ENCODE measurements at regions of chr11 and their contacts with region 1.

Region 1: GRCh38 chr11:35288817-35289541 is 130.4 kb downstream of the SLC1A2 start:
- DNase-seq: no peak
- H3K4me3 Mint-ChIP-seq: no peak overlapping the region
- H3K27ac Mint-ChIP-seq: peak overlapping the region; percentile 44
- H3K4me1 Mint-ChIP-seq: peaks cover 45% of the 10 kb centered on the region
- H3K27me3 Mint-ChIP-seq: no peaks in the 10 kb centered on the region

Region 2: GRCh38 chr11:35106595-35106994 is 182.4 kb before region 1 on chr11:
- intact Hi-C with region 1: no loop called
- DNase-seq: no peak
- H3K4me3 Mint-ChIP-seq: no peak overlapping the region
- H3K27ac Mint-ChIP-seq: no peak overlapping the region
- H3K4me1 Mint-ChIP-seq: peaks cover 28% of the 10 kb centered on the region
- H3K27me3 Mint-ChIP-seq: peaks cover 28% of the 10 kb centered on the region

Region 3: GRCh38 chr11:35173011-35173511 is 115.9 kb before region 1 on chr11:
- intact Hi-C with region 1: loop called (anchors 5 kb)
- DNase-seq: no peak
- H3K4me3 Mint-ChIP-seq: no peak overlapping the region
- H3K27ac Mint-ChIP-seq: peak overlapping the region; percentile 75
- H3K4me1 Mint-ChIP-seq: peaks cover 91% of the 10 kb centered on the region
- H3K27me3 Mint-ChIP-seq: no peaks in the 10 kb centered on the region

Region 4: GRCh38 chr11:35237860-35238715 is 50.9 kb before region 1 on chr11:
- intact Hi-C with region 1: loop called (anchors 5 kb)
- DNase-seq: peak; percentile 34
- H3K4me3 Mint-ChIP-seq: no peak overlapping the region
- H3K27ac Mint-ChIP-seq: no peak overlapping the region
- H3K4me1 Mint-ChIP-seq: peaks cover 78% of the 10 kb centered on the region
- H3K27me3 Mint-ChIP-seq: peaks cover 13% of the 10 kb centered on the region

Region 5: DNA sequence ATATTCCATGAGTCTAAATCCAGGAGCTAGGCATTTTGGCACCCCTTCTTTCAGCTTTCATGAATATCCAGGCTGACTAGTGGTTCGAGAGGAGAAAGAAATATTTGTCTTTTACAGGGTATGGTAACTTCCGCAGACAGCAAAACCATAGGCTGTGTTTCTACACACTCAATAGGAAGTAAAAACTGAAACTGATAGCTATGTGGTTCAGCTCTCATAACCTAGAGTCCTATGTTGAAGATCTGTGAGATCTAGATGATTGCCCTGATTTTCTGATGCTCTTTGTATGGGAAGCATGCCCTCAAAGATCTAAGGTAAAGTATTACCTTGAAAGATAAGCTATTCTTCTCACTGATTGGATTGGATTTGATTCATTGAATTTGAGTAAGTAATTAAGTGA is 31.7 kb before region 1 on chr11:
- intact Hi-C with region 1: loop called (anchors 2 kb)
- DNase-seq: no peak
- H3K4me3 Mint-ChIP-seq: no peak overlapping the region
- H3K27ac Mint-ChIP-seq: no peak overlapping the region
- H3K4me1 Mint-ChIP-seq: peaks cover 20% of the 10 kb centered on the region
- H3K27me3 Mint-ChIP-seq: peaks cover 68% of the 10 kb centered on the region

Region 6: DNA sequence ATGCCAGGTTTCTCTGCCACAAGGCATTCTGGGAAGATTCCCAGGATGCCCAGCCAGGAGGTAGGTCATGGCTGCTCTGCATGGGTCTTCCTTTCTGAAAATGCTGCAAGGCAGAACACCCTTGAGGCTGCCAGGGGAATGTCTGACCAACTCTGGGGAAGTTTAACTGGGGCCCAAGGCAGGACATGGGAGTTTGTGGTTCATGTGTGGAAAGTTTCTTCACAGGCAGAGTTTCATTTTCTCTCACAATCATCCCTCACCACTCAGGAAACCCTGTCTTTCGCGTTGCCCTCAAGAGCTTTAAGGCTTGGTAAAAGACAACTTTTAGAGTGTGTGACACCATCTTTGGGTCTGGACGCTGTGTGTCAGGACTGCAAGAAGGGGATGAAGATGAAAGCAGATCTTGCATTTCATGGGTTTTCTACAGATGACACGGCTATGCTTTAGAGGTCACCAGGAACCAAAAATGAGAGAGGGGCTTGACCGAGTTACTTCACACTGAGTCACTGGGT is 16.5 kb before region 1 on chr11:
- intact Hi-C with region 1: loop called (anchors 1 kb)
- DNase-seq: peak; percentile 36
- H3K4me3 Mint-ChIP-seq: peak overlapping the region; percentile 23
- H3K27ac Mint-ChIP-seq: peak overlapping the region; percentile 79
- H3K4me1 Mint-ChIP-seq: peaks cover 57% of the 10 kb centered on the region
- H3K27me3 Mint-ChIP-seq: peaks cover 18% of the 10 kb centered on the region

Region 7: DNA sequence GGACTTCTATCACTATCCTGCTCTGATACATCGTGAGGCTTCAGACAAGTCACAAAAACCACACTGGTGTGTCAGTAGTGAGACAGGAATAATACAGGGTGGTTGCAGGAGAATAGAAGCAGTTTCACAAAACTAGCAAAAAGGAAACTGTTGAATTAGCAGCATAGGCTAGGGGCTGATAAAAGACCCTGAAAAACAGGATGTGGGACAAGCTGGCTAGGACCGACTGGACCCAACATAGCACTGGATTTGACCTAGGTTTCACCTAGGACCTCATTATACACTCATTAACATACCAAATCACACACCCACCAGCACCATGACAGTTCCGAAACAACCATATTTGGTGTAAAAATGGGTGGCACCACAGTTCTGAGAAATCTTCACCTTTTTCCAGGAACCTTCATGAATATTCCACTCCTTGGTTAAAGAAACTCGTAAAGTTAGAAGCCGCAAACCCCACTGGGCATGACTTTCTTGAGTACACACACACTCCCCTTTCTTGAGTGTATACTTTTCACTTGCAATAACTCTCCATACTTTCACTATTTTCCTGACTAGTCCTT is 54.1 kb after region 1 on chr11:
- intact Hi-C with region 1: loop called (anchors 5 kb)
- DNase-seq: peak; percentile 74
- H3K4me3 Mint-ChIP-seq: peak overlapping the region; percentile 20
- H3K27ac Mint-ChIP-seq: peak overlapping the region; percentile 81
- H3K4me1 Mint-ChIP-seq: peaks cover 46% of the 10 kb centered on the region
- H3K27me3 Mint-ChIP-seq: no peaks in the 10 kb centered on the region